ENCODE measurements at regions of chr17 and their contacts with region 1.

Region 1: DNA sequence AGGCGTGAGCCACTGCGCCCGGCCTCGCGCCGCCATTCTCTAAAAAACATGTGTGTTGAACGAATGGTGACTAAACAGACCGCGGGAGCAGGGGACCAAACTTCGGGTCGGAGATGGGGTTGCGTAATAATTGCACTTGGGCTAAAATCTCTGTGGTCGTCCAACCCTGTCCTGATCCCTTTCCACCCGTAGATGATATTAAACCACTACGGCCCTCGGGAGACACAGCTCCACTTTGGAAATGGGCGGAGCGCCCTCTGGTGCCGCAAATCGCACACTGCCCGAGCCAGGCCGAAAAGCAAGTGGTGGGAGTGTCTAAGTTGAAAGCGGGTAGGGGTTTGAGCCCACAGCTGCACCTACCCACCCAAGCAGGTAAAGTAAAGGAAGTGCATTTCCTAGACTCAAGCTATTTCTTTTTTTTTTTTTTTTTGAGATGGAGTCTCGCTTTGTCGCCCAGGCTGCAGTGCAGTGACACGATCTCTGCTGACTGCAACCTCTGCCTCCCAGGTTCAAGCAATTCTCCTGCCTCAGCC is 17.0 kb downstream of the CAVIN1 start:
- DNase-seq: no peak
- H3K4me3 ChIP-seq: no peak overlapping the region
- CTCF ChIP-seq: peak; percentile 72

Region 2: DNA sequence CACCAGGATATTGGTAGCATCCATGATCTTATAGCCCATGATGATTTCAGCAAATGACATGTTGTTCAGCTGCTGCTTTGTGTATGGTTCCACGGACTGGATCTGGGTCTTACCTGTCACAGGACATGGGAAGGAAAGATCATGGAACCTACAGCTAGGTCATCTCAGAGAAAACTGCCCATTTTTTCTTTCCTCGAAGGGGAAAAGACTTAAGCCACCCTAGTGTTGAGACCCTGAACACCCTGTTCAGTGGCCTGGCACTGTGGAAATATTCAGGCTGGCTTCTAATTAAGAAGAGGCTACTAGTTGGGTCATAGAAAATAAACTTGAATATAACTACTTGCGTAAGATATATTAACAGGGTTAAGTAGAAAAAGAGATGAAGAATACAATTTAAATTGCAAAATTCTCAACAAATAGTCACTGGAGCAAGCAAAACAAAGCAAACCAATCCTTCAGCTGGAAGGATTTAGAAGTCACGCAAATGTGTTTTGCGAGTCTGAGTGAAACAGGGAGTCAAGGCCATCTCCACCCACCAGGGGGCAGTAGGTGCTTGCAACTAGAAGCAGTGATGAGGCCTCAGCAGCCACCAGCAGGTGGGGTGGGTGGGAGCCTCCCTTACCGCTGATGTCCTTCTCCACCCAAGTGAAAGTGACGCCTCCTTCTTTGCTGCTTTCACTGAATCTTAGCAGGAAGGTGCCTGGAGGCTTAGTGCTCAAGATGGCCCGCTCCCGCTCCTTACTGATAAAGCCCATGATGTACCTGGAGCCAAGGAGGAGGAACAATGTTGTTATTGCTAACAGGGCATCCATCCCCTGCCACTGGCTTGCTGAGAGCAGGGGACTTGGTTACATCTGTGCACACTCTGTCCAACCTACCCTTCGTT is 83.4 kb before region 1 on chr17:
- CTCF ChIA-PET with region 1: interaction called, 54 read pairs
- POLR2A ChIA-PET with region 1: no interaction called
- DNase-seq: peak; percentile 76
- H3K4me3 ChIP-seq: no peak overlapping the region
- CTCF ChIP-seq: peak; percentile 100

Region 3: DNA sequence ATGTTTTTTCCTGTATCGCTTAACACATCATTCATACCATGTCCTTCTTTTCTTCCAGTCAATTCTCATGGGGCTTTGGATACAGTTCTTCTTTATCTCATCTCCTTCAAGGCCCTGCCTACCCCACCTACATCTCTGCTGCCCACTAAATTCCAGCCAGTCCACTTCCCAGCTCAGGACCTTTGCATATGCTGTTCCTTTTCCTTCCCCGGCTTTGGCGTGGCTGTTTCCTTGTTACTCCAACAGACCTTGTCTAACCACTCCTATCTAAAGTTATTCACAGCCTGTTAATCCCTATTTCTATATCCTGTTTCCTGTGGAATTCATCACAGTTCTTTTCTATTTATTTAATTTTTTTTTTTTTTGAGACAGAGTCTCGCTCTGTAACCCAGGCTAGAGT is 11.2 kb before region 1 on chr17:
- CTCF ChIA-PET with region 1: interaction called, 15 read pairs
- POLR2A ChIA-PET with region 1: interaction called, 3 read pairs
- DNase-seq: no peak
- H3K4me3 ChIP-seq: no peak overlapping the region
- CTCF ChIP-seq: no peak

Region 4: DNA sequence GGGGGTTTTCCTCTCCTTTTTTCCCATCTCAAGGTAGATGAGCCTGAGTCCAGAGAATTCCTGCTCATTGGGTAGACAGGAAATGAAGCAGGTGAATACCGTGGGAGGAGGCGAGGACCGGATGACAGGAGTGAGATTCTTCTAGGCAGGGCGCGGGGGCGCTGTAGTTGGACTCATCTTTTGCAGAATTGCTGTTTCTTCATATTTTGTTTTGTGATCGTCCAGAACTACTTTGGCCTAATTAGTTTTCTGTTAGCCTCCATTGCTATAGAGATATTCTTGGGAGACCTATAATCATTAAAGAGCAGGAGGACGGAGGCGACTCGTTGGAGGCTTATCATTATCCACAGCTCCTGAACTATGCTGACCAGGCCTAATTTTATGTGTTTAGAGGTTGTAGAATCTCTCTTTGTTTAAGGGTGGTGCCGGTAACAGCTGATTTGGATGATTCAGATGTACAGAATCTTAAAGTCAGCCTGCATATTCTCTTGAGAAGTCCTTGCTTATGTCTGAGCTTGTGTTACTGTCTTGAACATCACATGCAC is 53.3 kb after region 1 on chr17:
- CTCF ChIA-PET with region 1: no interaction called
- POLR2A ChIA-PET with region 1: no interaction called
- DNase-seq: no peak
- H3K4me3 ChIP-seq: peak overlapping the region; percentile 78
- CTCF ChIP-seq: peak; percentile 37

Region 5: GRCh38 chr17:42517516-42517915 is 111.5 kb after region 1 on chr17:
- CTCF ChIA-PET with region 1: interaction called, 48 read pairs
- POLR2A ChIA-PET with region 1: interaction called, 3 read pairs
- DNase-seq: peak; percentile 76
- H3K4me3 ChIP-seq: no peak overlapping the region
- CTCF ChIP-seq: peak; percentile 96

Region 6: DNA sequence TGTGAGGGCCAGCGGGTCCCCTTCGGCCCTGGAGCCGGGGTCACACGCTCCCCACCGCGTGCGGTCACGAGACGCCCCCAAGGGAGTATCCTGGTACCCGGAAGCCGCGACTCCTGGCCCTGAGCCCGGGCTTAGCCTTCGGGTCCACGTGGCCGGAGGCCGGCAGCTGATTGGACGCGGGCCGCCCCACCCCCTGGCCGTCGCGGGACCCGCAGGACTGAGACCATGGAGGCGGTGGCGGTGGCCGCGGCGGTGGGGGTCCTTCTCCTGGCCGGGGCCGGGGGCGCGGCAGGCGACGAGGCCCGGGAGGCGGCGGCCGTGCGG is 130.0 kb after region 1 on chr17 and contains the start of gene NAGLU:
- CTCF ChIA-PET with region 1: interaction called, 10 read pairs
- POLR2A ChIA-PET with region 1: no interaction called
- DNase-seq: no peak
- H3K4me3 ChIP-seq: peak within 1 kb of the TSS; percentile 61
- CTCF ChIP-seq: no peak

Measured in AG04449 (cell line).